ENCODE measurements at regions of chr20 and their contacts with region 1.

Region 1: GRCh38 chr20:38434743-38435554 is at the start of gene SNHG17:
- DNase-seq: peak; percentile 60
- ATAC-seq: peak; percentile 83
- H3K4me3 ChIP-seq: peak within 1 kb of the TSS; percentile 93
- H3K27ac ChIP-seq: peak within 1 kb of the TSS; percentile 77
- H3K4me1 ChIP-seq: peaks cover 7% of the 10 kb centered on the region
- H3K27me3 ChIP-seq: no peaks in the 10 kb centered on the region
- CTCF ChIP-seq: peak; percentile 100; a peak in 5 of 6 replicates
- EP300 ChIP-seq: no peak
- POLR2A ChIP-seq: peak; percentile 100
- RAD21 ChIP-seq: peak; percentile 24; the same call in 1 of the 2 replicates
- polyA plus RNA-seq, gene SNHG17: 25.6 to 33.9 TPM

Region 2: GRCh38 chr20:38424404-38424803 is 10.5 kb before region 1 on chr20:
- CTCF ChIA-PET with region 1: interaction called, 6 read pairs
- POLR2A ChIA-PET with region 1: interaction called, 3 read pairs
- RAD21 ChIA-PET with region 1: no interaction called
- SMC1A ChIA-PET with region 1: interaction called, 9 read pairs
- in situ Hi-C with region 1: no loop called
- intact Hi-C with region 1: loop called (anchors 1 kb)
- DNase-seq: no peak
- ATAC-seq: peak; percentile 7
- H3K4me3 ChIP-seq: no peak overlapping the region
- H3K27ac ChIP-seq: no peak overlapping the region
- H3K4me1 ChIP-seq: no peaks in the 10 kb centered on the region
- H3K27me3 ChIP-seq: no peaks in the 10 kb centered on the region
- CTCF ChIP-seq: no peak
- EP300 ChIP-seq: no peak
- POLR2A ChIP-seq: peak; percentile 52
- RAD21 ChIP-seq: no peak

Region 3: GRCh38 chr20:38446441-38447209 is 11.7 kb after region 1 on chr20:
- CTCF ChIA-PET with region 1: interaction called, 112 read pairs
- POLR2A ChIA-PET with region 1: interaction called, 45 read pairs
- RAD21 ChIA-PET with region 1: interaction called, 9 read pairs
- SMC1A ChIA-PET with region 1: interaction called, 27 read pairs
- in situ Hi-C with region 1: no loop called
- intact Hi-C with region 1: loop called (anchors 1 kb)
- DNase-seq: peak; percentile 56
- ATAC-seq: peak; percentile 95
- H3K4me3 ChIP-seq: peak overlapping the region; percentile 92
- H3K27ac ChIP-seq: peak overlapping the region; percentile 84
- H3K4me1 ChIP-seq: peaks cover 11% of the 10 kb centered on the region
- H3K27me3 ChIP-seq: no peaks in the 10 kb centered on the region
- CTCF ChIP-seq: peak; percentile 89 to 99 (median 90); a peak in 5 of 6 replicates
- EP300 ChIP-seq: 0 out of 4 replicates have a peak, but pooled peaks of 1 of the 2 experiments have one; percentile 37
- POLR2A ChIP-seq: peak; percentile 100
- RAD21 ChIP-seq: peak; percentile 35; the same call in 1 of the 2 replicates

Region 4: DNA sequence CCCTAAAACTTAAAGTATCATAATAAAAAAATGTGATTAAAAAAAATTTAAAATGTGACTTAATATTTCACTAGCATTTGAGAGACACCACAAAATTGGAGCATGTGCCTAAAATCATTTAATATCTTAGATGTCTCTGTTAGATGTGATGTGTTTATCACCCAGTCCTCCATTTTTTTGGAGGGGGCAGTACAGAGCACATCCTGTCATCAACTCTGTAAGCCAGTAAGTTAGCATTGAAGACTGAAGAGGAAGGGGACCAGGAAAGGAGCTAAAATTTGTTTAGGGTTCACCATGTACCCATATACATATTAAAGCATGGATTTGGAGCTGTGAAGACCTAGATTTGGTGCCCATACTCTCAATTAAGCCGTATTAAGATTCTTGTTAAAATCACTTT is 115.3 kb after region 1 on chr20:
- CTCF ChIA-PET with region 1: no interaction called
- POLR2A ChIA-PET with region 1: no interaction called
- RAD21 ChIA-PET with region 1: no interaction called
- SMC1A ChIA-PET with region 1: no interaction called
- in situ Hi-C with region 1: no loop called
- intact Hi-C with region 1: no loop called
- DNase-seq: no peak
- ATAC-seq: peak; percentile 54; the same call in 1 of the 3 replicates
- H3K4me3 ChIP-seq: no peak overlapping the region
- H3K27ac ChIP-seq: no peak overlapping the region
- H3K4me1 ChIP-seq: no peaks in the 10 kb centered on the region
- H3K27me3 ChIP-seq: no peaks in the 10 kb centered on the region
- CTCF ChIP-seq: peak in 2 of 3 experiments; percentile 17 to 25; a peak in 2 of 6 replicates
- EP300 ChIP-seq: no peak
- POLR2A ChIP-seq: no peak
- RAD21 ChIP-seq: no peak

Measured in GM12878 (cell line).